ENCODE measurements at regions of chr11 and their contacts with region 1.

Region 1: GRCh38 chr11:30254307-30255298 is 23.8 kb downstream of the FSHB start:
- DNase-seq: no peak
- ATAC-seq: peak; percentile 47
- H3K4me3 ChIP-seq: no peak overlapping the region
- H3K27ac ChIP-seq: no peak overlapping the region
- H3K4me1 ChIP-seq: no peaks in the 10 kb centered on the region
- H3K27me3 ChIP-seq: no peaks in the 10 kb centered on the region
- CTCF ChIP-seq: no peak
- EP300 ChIP-seq: no peak
- POLR2A ChIP-seq: no peak
- RAD21 ChIP-seq: no peak

Region 2: DNA sequence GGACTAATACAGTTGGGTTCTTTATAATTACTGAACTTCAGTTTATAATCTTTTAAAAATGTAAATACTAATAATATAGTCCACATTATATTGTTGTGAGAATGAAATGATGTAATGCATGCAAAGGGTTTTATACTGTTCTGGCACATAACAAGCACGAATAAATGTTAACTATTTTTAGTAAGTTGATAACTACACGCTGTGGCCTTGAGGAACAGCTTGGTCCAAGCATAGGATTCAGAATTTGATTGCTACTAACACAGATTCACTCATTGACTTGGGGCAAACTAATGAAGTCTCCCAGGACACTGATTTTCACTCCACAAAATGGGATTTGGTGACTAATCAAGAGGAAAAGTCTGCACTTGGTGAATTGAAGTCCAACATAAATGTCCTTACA is 276.1 kb before region 1 on chr11:
- CTCF ChIA-PET with region 1: no interaction called
- POLR2A ChIA-PET with region 1: no interaction called
- RAD21 ChIA-PET with region 1: no interaction called
- SMC1A ChIA-PET with region 1: no interaction called
- in situ Hi-C with region 1: no loop called
- intact Hi-C with region 1: no loop called
- DNase-seq: no peak
- ATAC-seq: no peak
- H3K4me3 ChIP-seq: no peak overlapping the region
- H3K27ac ChIP-seq: no peak overlapping the region
- H3K4me1 ChIP-seq: no peaks in the 10 kb centered on the region
- H3K27me3 ChIP-seq: no peaks in the 10 kb centered on the region
- CTCF ChIP-seq: no peak
- EP300 ChIP-seq: no peak
- POLR2A ChIP-seq: no peak
- RAD21 ChIP-seq: no peak

Region 3: GRCh38 chr11:30159546-30159945 is 95.1 kb before region 1 on chr11:
- CTCF ChIA-PET with region 1: no interaction called
- POLR2A ChIA-PET with region 1: no interaction called
- RAD21 ChIA-PET with region 1: no interaction called
- SMC1A ChIA-PET with region 1: no interaction called
- in situ Hi-C with region 1: no loop called
- intact Hi-C with region 1: no loop called
- DNase-seq: no peak
- ATAC-seq: no peak
- H3K4me3 ChIP-seq: no peak overlapping the region
- H3K27ac ChIP-seq: no peak overlapping the region
- H3K4me1 ChIP-seq: no peaks in the 10 kb centered on the region
- H3K27me3 ChIP-seq: no peaks in the 10 kb centered on the region; a peak in 1 of 4 replicates
- CTCF ChIP-seq: no peak
- EP300 ChIP-seq: no peak
- POLR2A ChIP-seq: no peak
- RAD21 ChIP-seq: no peak

Region 4: GRCh38 chr11:30228323-30228884 is 26.2 kb before region 1 on chr11:
- CTCF ChIA-PET with region 1: no interaction called
- POLR2A ChIA-PET with region 1: no interaction called
- RAD21 ChIA-PET with region 1: no interaction called
- SMC1A ChIA-PET with region 1: no interaction called
- in situ Hi-C with region 1: no loop called
- intact Hi-C with region 1: no loop called
- DNase-seq: no peak
- ATAC-seq: no peak
- H3K4me3 ChIP-seq: no peak overlapping the region
- H3K27ac ChIP-seq: no peak overlapping the region
- H3K4me1 ChIP-seq: no peaks in the 10 kb centered on the region
- H3K27me3 ChIP-seq: no peaks in the 10 kb centered on the region; a peak in 1 of 4 replicates
- CTCF ChIP-seq: no peak
- EP300 ChIP-seq: no peak
- POLR2A ChIP-seq: no peak
- RAD21 ChIP-seq: no peak

Region 5: GRCh38 chr11:30244265-30244664 is 10.3 kb before region 1 on chr11:
- CTCF ChIA-PET with region 1: interaction called, 22 read pairs
- POLR2A ChIA-PET with region 1: no interaction called
- RAD21 ChIA-PET with region 1: interaction called, 4 read pairs
- SMC1A ChIA-PET with region 1: interaction called, 8 read pairs
- in situ Hi-C with region 1: no loop called
- intact Hi-C with region 1: no loop called
- DNase-seq: no peak
- ATAC-seq: no peak
- H3K4me3 ChIP-seq: no peak overlapping the region
- H3K27ac ChIP-seq: no peak overlapping the region
- H3K4me1 ChIP-seq: no peaks in the 10 kb centered on the region
- H3K27me3 ChIP-seq: 0 out of 4 replicates have a peak, but pooled peaks cover 0 to 1% of the 10 kb centered on the region in 2 experiments
- CTCF ChIP-seq: no peak
- EP300 ChIP-seq: no peak
- POLR2A ChIP-seq: no peak
- RAD21 ChIP-seq: no peak

Measured in GM12878 (cell line).